WTC11 (cell line): ENCODE measurements at regions of chr15 and their contacts with region 1.

Region 1: GRCh38 chr15:59420986-59421618 is 16.9 kb upstream of the FAM81A start:
- DNase-seq: peak; percentile 36
- ATAC-seq: peak; percentile 97
- H3K4me3 Mint-ChIP-seq: no peak overlapping the region
- H3K27ac Mint-ChIP-seq: no peak overlapping the region
- H3K4me1 Mint-ChIP-seq: peaks cover 19% of the 10 kb centered on the region
- H3K27me3 Mint-ChIP-seq: peaks cover 26% of the 10 kb centered on the region
- CTCF ChIP-seq: no peak

Region 2: DNA sequence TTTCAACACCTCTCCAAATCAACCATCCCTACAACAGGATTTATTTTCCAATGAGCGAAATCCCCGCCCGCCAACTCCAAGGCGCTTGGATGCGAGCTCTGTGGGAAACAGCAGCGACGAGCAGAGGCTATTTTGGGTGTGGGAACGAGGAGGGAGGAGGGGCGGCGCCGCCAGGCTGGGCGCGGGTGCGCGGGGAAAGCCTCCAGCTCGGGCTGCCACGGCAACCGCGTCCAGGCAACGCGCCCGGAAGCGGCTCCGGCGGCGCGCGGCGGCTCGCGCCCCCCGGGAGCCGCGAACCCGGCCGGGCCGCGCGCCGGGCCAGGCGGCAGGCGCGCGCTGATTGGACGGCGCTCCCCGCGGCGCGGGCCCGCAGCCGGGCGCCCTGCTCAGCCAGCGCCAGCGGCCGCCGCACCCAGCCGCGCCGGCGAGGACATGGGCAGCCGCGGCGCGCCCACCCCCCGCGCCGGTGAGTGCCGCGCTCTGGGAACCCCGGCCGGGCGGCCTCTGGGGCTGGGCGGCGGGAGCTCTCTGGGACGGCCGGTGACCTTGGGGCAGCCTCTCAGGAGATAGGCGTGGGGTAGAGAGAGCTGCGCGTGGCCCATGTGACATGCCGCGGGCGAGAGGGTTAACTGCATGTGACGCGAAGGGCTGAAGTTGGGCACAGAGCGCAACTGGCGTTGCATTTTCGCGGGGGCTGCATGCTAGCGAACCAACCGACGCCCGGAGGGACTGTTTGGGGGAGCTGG is 16.9 kb after region 1 on chr15 and contains the start of gene FAM81A:
- CTCF ChIA-PET with region 1: interaction called, 16 read pairs
- POLR2A ChIA-PET with region 1: no interaction called
- DNase-seq: peak; percentile 68
- ATAC-seq: peak; percentile 75
- H3K4me3 Mint-ChIP-seq: peak within 1 kb of the TSS; percentile 82
- H3K27ac Mint-ChIP-seq: no peak within 1 kb of the TSS
- H3K4me1 Mint-ChIP-seq: peaks cover 13% of the 10 kb centered on the region
- H3K27me3 Mint-ChIP-seq: peaks cover 76% of the 10 kb centered on the region
- CTCF ChIP-seq: no peak
- total RNA-seq, gene FAM81A: 2.0 to 2.4 TPM (median 2.1 TPM) in 3 replicates